AG04449 (cell line): ENCODE measurements at regions of chr17 and their contacts with region 1.

Region 1: DNA sequence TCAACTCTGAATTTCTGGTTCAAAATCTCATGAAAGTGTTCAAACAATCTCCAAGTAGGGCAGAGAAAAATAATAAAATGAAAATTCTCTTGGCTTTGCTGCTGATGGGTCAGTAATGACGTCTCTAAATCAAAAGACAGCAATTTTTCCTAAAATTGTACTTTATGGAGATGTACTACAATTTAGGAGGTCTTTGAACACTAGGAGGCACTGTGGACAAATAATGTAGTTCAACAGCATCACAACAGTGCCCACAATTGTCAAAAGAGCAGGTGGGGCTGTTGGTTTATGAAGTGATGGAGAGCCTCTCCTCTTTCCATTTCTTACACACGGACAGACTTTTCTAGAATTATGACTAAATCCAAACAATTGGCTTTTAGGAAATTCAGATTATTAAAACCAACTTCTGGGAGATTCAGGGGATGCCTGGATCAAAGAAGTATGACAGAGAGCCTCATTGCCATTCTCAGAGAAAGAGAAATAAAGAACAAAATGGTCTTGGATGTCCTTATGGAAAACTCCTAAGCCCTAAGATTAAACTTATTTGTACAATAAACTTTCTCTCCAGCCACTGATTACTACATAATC is 23.8 kb downstream of the EZH1 start:
- DNase-seq: no peak
- H3K4me3 ChIP-seq: no peak overlapping the region
- CTCF ChIP-seq: peak; percentile 57

Region 2: GRCh38 chr17:42709561-42709960 is 11.5 kb before region 1 on chr17:
- CTCF ChIA-PET with region 1: interaction called, 19 read pairs
- POLR2A ChIA-PET with region 1: no interaction called
- DNase-seq: no peak
- H3K4me3 ChIP-seq: no peak overlapping the region
- CTCF ChIP-seq: no peak

Region 3: DNA sequence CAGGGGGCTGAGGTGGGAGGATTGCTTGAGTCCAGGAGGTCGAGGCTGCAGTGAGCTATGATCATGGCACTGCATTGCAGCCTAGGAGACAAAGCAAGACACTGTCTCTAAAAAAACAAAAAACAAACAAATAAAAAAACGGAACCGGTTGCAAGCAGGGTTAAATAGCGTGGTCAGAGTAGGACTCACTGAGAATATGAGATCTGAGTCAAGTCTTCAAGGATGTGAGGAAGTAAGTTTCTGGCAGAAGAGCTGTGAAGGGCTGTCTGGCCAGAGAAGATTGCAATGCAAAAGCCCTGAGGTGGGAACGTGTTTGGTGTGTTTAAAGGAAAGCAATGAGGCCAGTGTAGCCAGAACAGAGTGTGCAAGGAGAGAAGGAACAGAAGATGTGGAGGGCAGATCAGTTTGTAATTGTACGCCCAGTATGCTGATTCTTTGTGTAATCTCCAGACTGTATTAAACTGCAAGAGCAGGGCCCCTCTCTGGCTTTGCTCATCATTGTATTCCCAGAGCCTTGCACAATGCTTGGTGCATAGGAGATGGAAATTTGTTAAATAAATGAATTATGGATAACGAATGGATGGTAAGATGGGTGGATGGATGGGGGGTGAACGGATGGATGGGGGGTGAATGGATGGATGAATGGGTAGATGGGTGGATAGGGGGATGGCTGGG is 185.8 kb after region 1 on chr17:
- CTCF ChIA-PET with region 1: no interaction called
- POLR2A ChIA-PET with region 1: no interaction called
- DNase-seq: no peak
- H3K4me3 ChIP-seq: no peak overlapping the region
- CTCF ChIP-seq: no peak